AG04450 (cell line): ENCODE measurements at regions of chr14 and their contacts with region 1.

Region 1: DNA sequence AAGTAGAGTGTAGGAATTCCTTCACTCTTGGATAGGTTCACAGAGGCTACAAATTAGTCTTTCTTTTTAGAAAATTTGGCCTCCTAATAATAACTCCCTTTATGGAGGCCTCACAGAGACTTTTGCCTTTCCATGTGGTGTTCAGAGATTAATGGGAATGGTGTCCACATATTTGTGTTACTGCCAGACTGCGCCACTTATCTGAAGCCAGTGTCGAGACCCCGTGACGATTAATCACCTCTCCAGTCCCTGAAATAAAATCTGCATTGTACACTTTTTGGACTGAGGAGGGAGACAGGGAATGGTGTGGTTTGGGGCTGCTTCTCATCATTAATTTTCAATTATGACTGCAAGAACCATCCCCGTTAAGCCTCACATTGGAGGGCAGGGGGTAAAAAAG is 980.5 kb downstream of the FLRT2 start:
- DNase-seq: no peak
- H3K4me3 ChIP-seq: no peak overlapping the region
- H3K27ac ChIP-seq: no peak overlapping the region
- H3K27me3 ChIP-seq: no peaks in the 10 kb centered on the region
- CTCF ChIP-seq: no peak

Region 2: GRCh38 chr14:86179980-86180379 is 330.5 kb before region 1 on chr14:
- CTCF ChIA-PET with region 1: no interaction called
- POLR2A ChIA-PET with region 1: no interaction called
- DNase-seq: no peak
- H3K4me3 ChIP-seq: no peak overlapping the region
- H3K27ac ChIP-seq: no peak overlapping the region
- H3K27me3 ChIP-seq: no peaks in the 10 kb centered on the region
- CTCF ChIP-seq: no peak

Region 3: GRCh38 chr14:87041290-87042020 is 531.0 kb after region 1 on chr14:
- CTCF ChIA-PET with region 1: interaction called, 13 read pairs
- POLR2A ChIA-PET with region 1: no interaction called
- DNase-seq: no peak
- H3K4me3 ChIP-seq: no peak overlapping the region
- H3K27ac ChIP-seq: no peak overlapping the region
- H3K27me3 ChIP-seq: no peaks in the 10 kb centered on the region
- CTCF ChIP-seq: no peak